Naive thymus-derived CD4-positive, alpha-beta T cell (primary cell): ENCODE measurements at regions of chr5 and their contacts with region 1.

Region 1: DNA sequence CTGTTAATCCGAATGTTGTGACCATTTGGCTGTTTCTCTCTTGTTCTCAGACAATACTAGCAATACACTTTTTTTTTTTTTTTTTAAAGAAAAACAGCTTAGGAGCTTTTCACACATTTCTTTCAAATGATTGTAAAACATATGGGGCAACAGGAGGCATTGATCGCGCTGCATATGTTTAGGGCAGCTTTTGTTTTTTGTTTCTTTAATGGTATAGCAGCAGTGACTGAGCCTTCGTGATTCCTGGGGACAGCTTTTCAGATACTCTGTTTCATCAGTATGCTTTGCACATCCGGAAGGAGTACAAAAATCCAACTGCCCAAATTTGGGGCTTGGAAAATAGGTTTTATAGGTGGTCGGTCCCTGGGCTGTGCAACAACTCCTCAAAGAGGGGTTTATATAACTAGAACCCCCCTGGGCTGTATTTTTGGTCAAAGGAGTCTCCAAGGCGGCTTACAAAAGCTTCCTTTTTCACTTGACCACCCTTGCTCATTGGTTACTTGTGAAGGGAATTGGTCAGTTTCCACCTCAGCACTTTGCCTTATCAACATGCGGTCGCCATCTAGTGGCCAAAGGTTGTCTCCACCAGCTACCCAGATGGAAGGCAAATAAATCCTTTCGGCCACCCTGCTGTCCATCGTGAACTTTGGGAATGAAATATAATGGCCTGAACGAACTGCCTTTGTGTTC is 91.8 kb downstream of the PDE6A start:
- DNase-seq: peak in 4 of 9 donors; percentile 5 to 34 (median 14)
- ATAC-seq: peak; percentile 57
- H3K4me3 ChIP-seq: no peak overlapping the region
- H3K4me3 Mint-ChIP-seq: no peak overlapping the region
- H3K27ac ChIP-seq: no peak overlapping the region
- H3K27ac Mint-ChIP-seq: no peak overlapping the region
- H3K4me1 ChIP-seq: no peaks in the 10 kb centered on the region
- H3K4me1 Mint-ChIP-seq: no peaks in the 10 kb centered on the region
- H3K27me3 ChIP-seq: no peaks in the 10 kb centered on the region
- H3K27me3 Mint-ChIP-seq: no peaks in the 10 kb centered on the region

Region 2: DNA sequence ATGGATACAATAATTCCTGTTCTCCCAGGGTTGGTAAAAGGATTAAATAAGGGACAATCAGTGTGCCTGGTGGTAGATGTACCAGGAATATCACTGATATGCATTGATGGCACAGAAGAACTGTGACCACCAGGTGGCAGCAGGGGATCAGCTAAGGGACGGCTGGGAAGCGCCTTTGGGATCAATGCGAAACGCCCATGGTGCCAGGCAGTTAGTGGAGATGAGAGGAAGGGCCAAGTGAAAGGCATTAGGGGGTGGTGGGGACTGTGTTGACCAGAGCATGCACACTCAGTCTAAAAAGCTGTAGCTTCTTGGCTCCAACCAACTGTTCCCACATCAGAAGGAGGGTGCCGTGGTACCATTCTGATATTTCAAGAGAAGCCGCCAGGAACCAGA is 215.9 kb before region 1 on chr5:
- CTCF ChIA-PET with region 1: interaction called, 9 read pairs
- POLR2A ChIA-PET with region 1: no interaction called
- intact Hi-C with region 1: loop called (anchors 1 kb)
- DNase-seq: peak in 7 of 9 donors; percentile 24 to 68 (median 43)
- ATAC-seq: peak; percentile 77
- H3K4me3 ChIP-seq: no peak overlapping the region
- H3K4me3 Mint-ChIP-seq: no peak overlapping the region
- H3K27ac ChIP-seq: no peak overlapping the region
- H3K27ac Mint-ChIP-seq: no peak overlapping the region
- H3K4me1 ChIP-seq: no peaks in the 10 kb centered on the region
- H3K4me1 Mint-ChIP-seq: peaks cover 0 to 8% (median 0%) of the 10 kb centered on the region in 7 donors
- H3K27me3 ChIP-seq: no peaks in the 10 kb centered on the region
- H3K27me3 Mint-ChIP-seq: peaks cover 0 to 3% (median 0%) of the 10 kb centered on the region in 5 donors

Region 3: DNA sequence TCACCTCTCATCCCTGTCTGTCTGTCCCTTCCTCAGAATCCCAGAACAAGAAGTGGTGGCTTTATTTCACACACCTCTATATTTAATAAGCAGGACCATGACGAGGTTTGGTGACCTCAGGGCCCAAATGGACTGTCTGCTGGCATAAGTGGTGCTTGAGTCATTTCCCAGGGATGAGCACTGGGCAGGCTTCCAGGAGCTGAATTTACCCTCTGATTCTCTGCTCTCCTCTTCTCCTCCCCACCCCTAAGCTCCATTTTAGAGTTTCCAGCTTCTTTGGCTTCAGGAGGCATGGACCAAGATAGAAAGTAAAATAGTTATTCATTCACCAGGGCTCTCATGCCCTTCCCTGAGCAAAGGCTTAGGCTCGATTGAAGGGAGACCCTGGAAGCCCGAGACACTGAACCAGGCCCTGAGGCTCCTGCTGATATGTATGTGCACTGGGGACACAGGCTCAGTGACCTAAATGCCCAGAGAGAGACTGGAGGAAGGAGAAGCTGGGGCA is 53.6 kb before region 1 on chr5:
- CTCF ChIA-PET with region 1: no interaction called
- POLR2A ChIA-PET with region 1: no interaction called
- intact Hi-C with region 1: no loop called
- DNase-seq: no peak
- ATAC-seq: no peak
- H3K4me3 ChIP-seq: no peak overlapping the region
- H3K4me3 Mint-ChIP-seq: no peak overlapping the region
- H3K27ac ChIP-seq: no peak overlapping the region
- H3K27ac Mint-ChIP-seq: peak overlapping the region in 1 of 9 donors; percentile 63
- H3K4me1 ChIP-seq: no peaks in the 10 kb centered on the region
- H3K4me1 Mint-ChIP-seq: peaks cover 0 to 19% (median 6%) of the 10 kb centered on the region in 7 donors
- H3K27me3 ChIP-seq: no peaks in the 10 kb centered on the region
- H3K27me3 Mint-ChIP-seq: no peaks in the 10 kb centered on the region

Region 4: GRCh38 chr5:149834246-149834855 is 18.4 kb before region 1 on chr5:
- CTCF ChIA-PET with region 1: interaction called, 5 read pairs
- POLR2A ChIA-PET with region 1: no interaction called
- intact Hi-C with region 1: loop called in 1 of 2 experiments (anchors 2 kb)
- DNase-seq: peak in 8 of 9 donors; percentile 29 to 63 (median 42)
- ATAC-seq: peak; percentile 68
- H3K4me3 ChIP-seq: no peak overlapping the region
- H3K4me3 Mint-ChIP-seq: no peak overlapping the region
- H3K27ac ChIP-seq: no peak overlapping the region
- H3K27ac Mint-ChIP-seq: no peak overlapping the region
- H3K4me1 ChIP-seq: no peaks in the 10 kb centered on the region
- H3K4me1 Mint-ChIP-seq: peaks cover 0 to 9% (median 0%) of the 10 kb centered on the region in 7 donors
- H3K27me3 ChIP-seq: no peaks in the 10 kb centered on the region
- H3K27me3 Mint-ChIP-seq: no peaks in the 10 kb centered on the region

Region 5: GRCh38 chr5:149990518-149991376 is 138.0 kb after region 1 on chr5:
- CTCF ChIA-PET with region 1: interaction called, 7 read pairs
- POLR2A ChIA-PET with region 1: no interaction called
- intact Hi-C with region 1: loop called in 1 of 2 experiments (anchors 5 kb)
- DNase-seq: peak; percentile 28 to 65 (median 57)
- ATAC-seq: peak; percentile 98
- H3K4me3 ChIP-seq: no peak overlapping the region
- H3K4me3 Mint-ChIP-seq: no peak overlapping the region
- H3K27ac ChIP-seq: no peak overlapping the region
- H3K27ac Mint-ChIP-seq: no peak overlapping the region
- H3K4me1 ChIP-seq: no peaks in the 10 kb centered on the region
- H3K4me1 Mint-ChIP-seq: no peaks in the 10 kb centered on the region
- H3K27me3 ChIP-seq: no peaks in the 10 kb centered on the region
- H3K27me3 Mint-ChIP-seq: no peaks in the 10 kb centered on the region

Region 6: GRCh38 chr5:150066901-150067396 is 214.2 kb after region 1 on chr5:
- CTCF ChIA-PET with region 1: no interaction called
- POLR2A ChIA-PET with region 1: no interaction called
- intact Hi-C with region 1: no loop called
- DNase-seq: no peak
- ATAC-seq: peak; percentile 62
- H3K4me3 ChIP-seq: no peak overlapping the region
- H3K4me3 Mint-ChIP-seq: peak overlapping the region in 1 of 10 donors; percentile 43
- H3K27ac ChIP-seq: no peak overlapping the region
- H3K27ac Mint-ChIP-seq: peak overlapping the region in 1 of 9 donors; percentile 57
- H3K4me1 ChIP-seq: no peaks in the 10 kb centered on the region
- H3K4me1 Mint-ChIP-seq: peaks cover 0 to 20% (median 0%) of the 10 kb centered on the region in 7 donors
- H3K27me3 ChIP-seq: no peaks in the 10 kb centered on the region
- H3K27me3 Mint-ChIP-seq: peaks cover 0 to 9% (median 0%) of the 10 kb centered on the region in 5 donors